ENCODE measurements at regions of chr2 and their contacts with region 1.

Region 1: GRCh38 chr2:219010162-219010756 is 17.0 kb upstream of the CRYBA2 start:
- DNase-seq: peak in 1 of 3 donors; percentile 45
- H3K4me3 ChIP-seq: no peak overlapping the region
- H3K27ac ChIP-seq: no peak overlapping the region
- H3K4me1 ChIP-seq: no peaks in the 10 kb centered on the region
- H3K27me3 ChIP-seq: peaks cover 7 to 43% (median 12%) of the 10 kb centered on the region in 5 experiments

Region 2: GRCh38 chr2:218995972-218996711 is 14.1 kb before region 1 on chr2:
- CTCF ChIA-PET with region 1: interaction called, 12 read pairs
- POLR2A ChIA-PET with region 1: no interaction called
- DNase-seq: peak; percentile 75 to 83 (median 81)
- H3K4me3 ChIP-seq: peak overlapping the region in 3 of 7 experiments; percentile 41 to 54 (median 46)
- H3K27ac ChIP-seq: no peak overlapping the region
- H3K4me1 ChIP-seq: peaks cover 0 to 24% (median 16%) of the 10 kb centered on the region in 4 experiments
- H3K27me3 ChIP-seq: peaks cover 9 to 98% (median 68%) of the 10 kb centered on the region in 5 experiments

Region 3: DNA sequence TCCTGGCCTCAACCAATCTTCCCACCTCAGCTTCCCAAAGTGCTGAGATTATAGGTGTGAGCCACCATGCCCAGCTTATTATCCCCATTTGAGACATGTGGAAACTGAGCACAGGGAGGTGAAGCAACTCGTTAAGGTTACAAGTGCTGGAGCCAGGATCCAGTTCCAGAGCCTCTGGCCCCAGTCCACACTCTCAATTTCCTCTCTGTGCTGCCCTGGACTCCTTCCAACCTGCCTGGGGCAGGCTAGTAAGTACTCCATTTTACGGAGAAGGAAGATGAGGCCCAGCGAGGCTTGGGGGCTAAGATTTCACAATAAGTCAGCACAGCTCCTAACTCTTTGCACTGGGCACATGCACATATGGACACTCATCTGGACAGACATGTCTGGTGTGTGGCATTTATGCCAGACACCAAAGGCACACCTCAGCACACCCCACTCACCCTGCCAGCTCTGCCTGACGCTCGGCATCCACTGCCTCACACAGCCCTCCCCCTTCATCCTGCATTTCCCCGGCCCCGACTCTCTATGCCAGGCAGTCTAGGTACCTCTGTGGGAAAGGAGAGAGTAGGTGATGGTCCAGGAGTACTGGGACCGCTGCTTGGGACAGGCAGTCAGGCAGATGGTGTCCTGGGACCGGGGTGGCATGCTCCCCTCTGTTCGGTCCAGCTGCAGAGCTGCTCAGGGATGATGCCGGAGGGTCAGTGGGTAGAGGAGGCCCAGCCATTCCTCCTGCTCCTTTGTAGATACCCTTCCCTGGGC is 10.5 kb after region 1 on chr2:
- CTCF ChIA-PET with region 1: interaction called, 57 read pairs
- POLR2A ChIA-PET with region 1: interaction called, 3 read pairs
- DNase-seq: no peak
- H3K4me3 ChIP-seq: no peak overlapping the region
- H3K27ac ChIP-seq: no peak overlapping the region
- H3K4me1 ChIP-seq: no peaks in the 10 kb centered on the region
- H3K27me3 ChIP-seq: peaks cover 0 to 18% (median 0%) of the 10 kb centered on the region in 5 experiments

Region 4: GRCh38 chr2:219037783-219038499 is 27.7 kb after region 1 on chr2:
- CTCF ChIA-PET with region 1: no interaction called
- POLR2A ChIA-PET with region 1: no interaction called
- DNase-seq: no peak
- H3K4me3 ChIP-seq: no peak overlapping the region
- H3K27ac ChIP-seq: no peak overlapping the region
- H3K4me1 ChIP-seq: peaks cover 0 to 4% (median 1%) of the 10 kb centered on the region in 4 experiments
- H3K27me3 ChIP-seq: peaks cover 7 to 84% (median 33%) of the 10 kb centered on the region in 5 experiments

Measured in common myeloid progenitor, CD34-positive (primary cell).